ENCODE measurements at regions of chr17 and their contacts with region 1.

Region 1: DNA sequence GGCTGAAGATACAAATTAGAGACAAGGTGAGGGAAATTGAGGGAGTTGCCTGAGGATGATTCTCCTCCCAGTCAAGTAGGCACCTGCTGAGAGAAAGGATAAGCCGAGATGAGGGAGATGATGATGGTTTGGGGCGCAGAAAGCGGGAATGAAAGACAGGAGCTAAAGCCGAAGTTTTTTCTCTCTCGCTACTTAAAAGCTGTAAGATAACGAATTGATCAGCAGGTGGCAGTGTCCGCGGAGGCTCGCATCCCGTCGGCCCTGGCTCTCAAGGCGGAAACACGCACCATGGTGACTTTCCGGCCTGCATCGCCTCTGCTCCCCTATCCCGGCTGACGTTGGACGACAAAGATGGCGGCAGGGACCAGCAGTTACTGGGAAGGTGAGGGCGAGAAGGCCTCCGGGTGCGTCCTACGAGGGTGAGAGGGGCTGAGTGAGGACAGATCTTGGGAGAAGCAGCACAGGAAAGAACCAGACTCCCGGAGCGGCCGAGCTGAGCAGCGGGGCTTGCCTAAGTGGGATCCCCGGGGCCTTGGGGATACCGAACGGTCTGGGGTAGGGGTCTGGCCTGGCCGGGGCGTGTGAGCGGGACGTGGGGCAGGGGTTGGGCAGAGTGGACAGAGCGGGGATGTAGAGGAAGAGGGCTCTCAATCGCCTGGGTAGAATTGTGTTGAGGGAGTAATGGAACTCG is at the start of gene GOSR1:
- DNase-seq: peak; percentile 77 to 97 (median 89)
- ATAC-seq: peak; percentile 98 to 100 (median 100)
- H3K4me3 ChIP-seq: peak within 1 kb of the TSS; percentile 75 to 92
- H3K4me3 Mint-ChIP-seq: peak within 1 kb of the TSS; percentile 94 to 99 (median 98)
- H3K27ac ChIP-seq: peak within 1 kb of the TSS; percentile 91
- H3K27ac Mint-ChIP-seq: peak within 1 kb of the TSS; percentile 97 to 99
- H3K4me1 ChIP-seq: peaks cover 9 to 12% of the 10 kb centered on the region in 2 experiments
- H3K4me1 Mint-ChIP-seq: peaks cover 43 to 50% (median 45%) of the 10 kb centered on the region in 3 donors
- H3K27me3 ChIP-seq: peaks cover 0 to 4% of the 10 kb centered on the region in 2 experiments
- H3K27me3 Mint-ChIP-seq: peaks cover 0 to 3% of the 10 kb centered on the region in 2 donors
- total RNA-seq, gene GOSR1: 47.7 to 56.3 (median 49.6) TPM

Region 2: DNA sequence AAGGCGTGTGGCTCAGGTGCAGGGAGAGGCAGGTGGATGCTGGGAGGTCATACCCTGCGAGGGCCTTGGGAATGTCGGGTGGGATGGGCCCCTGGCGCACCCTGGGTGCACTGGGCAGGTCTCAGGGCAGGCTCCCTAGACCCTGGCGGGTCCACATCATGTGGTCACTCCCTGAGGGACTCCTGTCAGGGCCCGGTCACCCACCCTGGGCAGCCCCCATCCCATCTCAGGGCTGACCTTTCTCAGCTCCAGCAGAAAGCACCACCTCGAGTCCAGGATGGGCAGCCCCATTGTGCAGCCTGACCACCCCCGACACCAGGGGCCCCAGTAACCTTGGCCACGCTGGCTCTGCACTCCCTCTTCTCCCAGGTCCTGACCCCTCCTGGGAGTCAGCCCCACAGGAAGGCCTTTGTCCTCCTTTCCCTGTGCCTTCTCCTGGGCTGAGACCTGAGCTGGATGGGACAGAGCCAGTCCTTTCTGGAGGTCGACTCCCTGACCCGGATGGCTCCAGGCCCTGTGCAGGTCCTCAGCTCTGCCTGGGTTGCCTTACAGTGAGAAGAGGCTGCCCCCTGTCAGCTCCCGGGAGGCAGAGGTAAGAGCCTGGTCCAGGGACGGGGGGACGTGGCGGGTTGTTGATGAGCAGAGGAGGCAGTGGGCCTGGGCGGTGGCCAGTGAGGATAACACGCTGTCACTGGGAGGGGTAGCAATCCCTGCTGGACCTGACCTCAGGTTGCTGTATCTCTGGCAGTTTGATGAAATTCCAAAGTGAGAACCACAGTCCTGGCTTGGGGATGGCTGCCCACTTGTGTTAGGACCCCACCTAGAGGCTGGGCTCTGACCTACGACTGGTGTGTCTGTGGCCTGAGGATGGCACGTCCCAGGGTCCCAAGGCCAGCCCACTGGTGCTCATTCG is 77.9 kb after region 1 on chr17:
- CTCF ChIA-PET with region 1: interaction called in 1 of 2 experiments, 13 read pairs
- POLR2A ChIA-PET with region 1: no interaction called
- DNase-seq: peak in 2 of 35 experiments; percentile 5 to 8
- ATAC-seq: no peak
- H3K4me3 ChIP-seq: no peak overlapping the region
- H3K4me3 Mint-ChIP-seq: no peak overlapping the region
- H3K27ac ChIP-seq: no peak overlapping the region
- H3K27ac Mint-ChIP-seq: no peak overlapping the region
- H3K4me1 ChIP-seq: peaks cover 0 to 4% of the 10 kb centered on the region in 2 experiments
- H3K4me1 Mint-ChIP-seq: peaks cover 0 to 16% (median 0%) of the 10 kb centered on the region in 3 donors
- H3K27me3 ChIP-seq: peaks cover 0 to 4% of the 10 kb centered on the region in 2 experiments
- H3K27me3 Mint-ChIP-seq: no peaks in the 10 kb centered on the region